ENCODE measurements at regions of chr15 and their contacts with region 1.

Region 1: DNA sequence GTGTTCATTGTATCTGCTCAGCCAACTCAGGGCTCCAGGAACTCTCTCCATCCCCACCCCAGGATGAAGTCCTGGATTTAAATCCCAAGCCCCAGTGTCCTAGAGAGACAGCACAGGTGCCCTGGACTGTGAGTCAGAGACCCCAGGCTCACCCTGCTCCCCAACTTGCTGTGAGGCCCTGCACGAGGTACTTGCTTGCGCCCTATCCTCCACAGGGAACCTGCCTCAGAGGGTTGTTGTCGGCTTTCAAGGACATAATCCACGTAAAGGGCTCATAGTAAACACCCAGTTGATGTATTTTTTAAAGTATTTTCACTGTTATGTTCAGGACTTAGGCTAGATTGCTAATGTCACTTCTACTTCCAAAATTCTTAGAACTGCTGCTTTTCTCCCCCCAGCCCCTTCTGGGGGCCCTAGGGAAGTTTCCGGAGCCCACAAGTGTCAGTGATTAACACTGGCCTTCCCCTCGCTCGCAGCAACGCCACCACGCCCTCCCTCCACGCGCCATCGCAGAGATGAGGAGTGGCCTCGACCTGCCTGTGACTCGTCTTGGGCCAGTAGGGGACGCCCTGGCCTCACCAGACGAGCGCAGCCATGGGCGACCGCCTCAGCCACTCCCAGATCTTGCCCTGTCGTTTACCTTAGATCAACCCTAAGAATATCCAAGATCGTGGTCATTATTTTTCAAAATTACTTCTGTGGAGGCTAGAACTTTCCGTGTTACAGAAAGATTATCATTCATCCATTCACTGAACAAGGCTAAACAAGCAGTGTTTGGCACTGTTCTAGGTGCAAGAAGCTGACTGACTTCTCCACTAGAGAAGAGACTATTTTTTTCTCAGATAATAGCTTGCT is 6.0 kb upstream of the SRP14 start:
- DNase-seq: peak; percentile 76 to 93 (median 86)

Region 2: GRCh38 chr15:40108855-40109735 is 64.2 kb after region 1 on chr15 and contains the start of gene BMF:
- intact Hi-C with region 1: loop called (anchors 10 kb)
- DNase-seq: peak; percentile 96 to 99 (median 98)

Region 3: DNA sequence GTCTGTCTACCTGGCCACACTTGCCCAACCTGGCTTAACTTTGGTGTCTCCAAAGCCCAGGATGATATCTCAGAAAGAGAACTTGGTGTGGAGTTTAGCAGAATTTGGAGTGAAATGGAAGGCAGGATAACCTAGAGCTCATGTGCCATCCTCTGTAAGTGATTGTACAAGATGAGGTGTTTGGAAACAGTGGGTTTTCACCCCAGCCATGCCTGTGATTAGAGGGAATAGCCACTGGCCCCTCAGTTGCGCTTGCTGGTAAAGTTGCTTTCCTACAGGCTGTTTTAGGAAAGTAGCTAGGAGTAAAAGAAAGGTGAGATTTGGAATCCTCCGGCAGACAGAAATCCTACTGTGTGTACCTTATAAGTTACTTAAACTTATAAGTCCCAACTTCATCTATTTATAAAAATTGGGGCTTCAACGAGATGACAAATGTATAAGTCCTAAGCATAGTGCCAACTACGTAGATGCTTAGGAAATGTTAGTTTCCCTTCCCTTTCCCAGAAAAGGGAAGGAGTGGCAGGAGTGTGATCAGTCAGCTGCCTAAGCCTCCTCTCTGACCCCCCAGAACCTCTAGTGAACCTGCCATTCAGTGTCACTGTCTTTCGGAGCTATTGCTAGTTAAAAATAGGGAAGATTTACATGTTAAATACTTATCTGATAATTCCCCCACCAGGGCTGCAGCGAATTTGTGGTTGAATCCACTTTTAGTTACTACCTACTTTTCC is 77.1 kb after region 1 on chr15:
- intact Hi-C with region 1: no loop called
- DNase-seq: peak in 1 of 42 donors; percentile 29

Region 4: GRCh38 chr15:40274350-40275274 is 229.7 kb after region 1 on chr15:
- intact Hi-C with region 1: loop called (anchors 5 kb)
- DNase-seq: peak; percentile 61 to 93 (median 85)

Region 5: DNA sequence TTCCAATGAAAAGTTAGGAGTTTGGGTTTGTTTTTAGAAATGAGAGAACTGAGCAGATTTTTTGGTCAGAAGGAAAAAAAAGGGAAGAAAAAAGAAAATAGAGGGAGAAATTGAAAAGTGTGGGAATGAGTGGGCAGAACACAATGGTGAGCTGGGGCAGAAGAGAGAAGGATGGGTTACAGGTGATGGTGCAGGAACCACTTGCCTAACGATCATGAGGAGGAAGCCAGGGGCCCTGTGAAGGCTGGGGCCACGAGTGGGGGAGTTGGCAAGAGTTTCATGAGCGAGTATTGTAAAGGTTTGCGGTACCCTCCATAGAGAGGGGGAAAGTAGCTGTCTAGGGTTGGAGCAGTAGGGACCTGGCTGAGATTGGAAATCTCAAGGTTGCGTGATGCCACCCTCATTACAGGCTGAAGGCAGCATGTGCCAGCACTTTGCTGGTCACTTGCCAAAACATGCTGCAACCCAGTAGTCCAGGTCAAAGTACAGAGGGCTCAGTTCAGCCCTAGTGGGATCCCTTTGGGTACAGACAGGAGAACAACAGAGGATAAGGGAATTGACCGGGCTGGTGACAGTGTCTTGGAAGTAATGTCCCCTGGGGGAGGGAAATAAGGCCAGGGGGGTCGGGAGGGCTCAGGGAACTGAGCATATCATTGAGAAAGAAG is 367.3 kb after region 1 on chr15:
- intact Hi-C with region 1: loop called (anchors 10 kb)
- DNase-seq: peak in 1 of 42 donors; percentile 8